ENCODE measurements at regions of chr9 and their contacts with region 1.

Region 1: GRCh38 chr9:27719711-27720110 is 146.4 kb upstream of the C9orf72 start:
- DNase-seq: no peak
- ATAC-seq: no peak
- H3K4me3 ChIP-seq: no peak overlapping the region
- H3K27ac ChIP-seq: no peak overlapping the region
- H3K4me1 ChIP-seq: no peaks in the 10 kb centered on the region
- H3K27me3 ChIP-seq: no peaks in the 10 kb centered on the region
- CTCF ChIP-seq: no peak
- EP300 ChIP-seq: no peak
- POLR2A ChIP-seq: no peak
- RAD21 ChIP-seq: no peak

Region 2: DNA sequence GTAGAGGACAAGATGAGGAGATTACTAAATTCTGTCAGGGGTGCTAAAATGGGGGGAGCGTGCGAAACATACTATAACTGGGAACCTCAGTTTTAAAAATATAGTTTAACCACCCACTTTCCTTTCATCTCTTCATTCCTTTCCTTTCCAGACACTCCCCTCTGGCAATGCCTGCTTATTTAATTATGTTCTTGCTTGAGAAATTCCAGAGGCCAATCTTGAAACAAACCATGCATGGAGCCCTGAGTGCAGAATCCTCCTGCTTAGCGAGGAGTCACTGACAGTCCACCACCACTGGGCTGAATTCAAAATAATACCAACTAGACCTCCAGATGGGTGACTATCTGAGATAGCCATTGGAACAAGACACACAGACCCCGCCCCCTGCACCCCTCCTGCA is 116.8 kb before region 1 on chr9:
- CTCF ChIA-PET with region 1: no interaction called
- POLR2A ChIA-PET with region 1: no interaction called
- in situ Hi-C with region 1: no loop called
- intact Hi-C with region 1: no loop called
- DNase-seq: no peak
- ATAC-seq: no peak
- H3K4me3 ChIP-seq: no peak overlapping the region
- H3K27ac ChIP-seq: no peak overlapping the region
- H3K4me1 ChIP-seq: no peaks in the 10 kb centered on the region
- H3K27me3 ChIP-seq: no peaks in the 10 kb centered on the region
- CTCF ChIP-seq: no peak
- EP300 ChIP-seq: no peak
- POLR2A ChIP-seq: no peak
- RAD21 ChIP-seq: no peak

Region 3: GRCh38 chr9:27645161-27645840 is 74.4 kb before region 1 on chr9:
- CTCF ChIA-PET with region 1: no interaction called
- POLR2A ChIA-PET with region 1: no interaction called
- in situ Hi-C with region 1: no loop called
- intact Hi-C with region 1: no loop called
- DNase-seq: no peak
- ATAC-seq: no peak
- H3K4me3 ChIP-seq: no peak overlapping the region
- H3K27ac ChIP-seq: no peak overlapping the region
- H3K4me1 ChIP-seq: no peaks in the 10 kb centered on the region
- H3K27me3 ChIP-seq: no peaks in the 10 kb centered on the region
- CTCF ChIP-seq: no peak
- EP300 ChIP-seq: no peak
- POLR2A ChIP-seq: no peak
- RAD21 ChIP-seq: no peak

Region 4: GRCh38 chr9:27743490-27743889 is 23.8 kb after region 1 on chr9:
- CTCF ChIA-PET with region 1: no interaction called
- POLR2A ChIA-PET with region 1: no interaction called
- in situ Hi-C with region 1: no loop called
- intact Hi-C with region 1: no loop called
- DNase-seq: no peak
- ATAC-seq: no peak
- H3K4me3 ChIP-seq: no peak overlapping the region
- H3K27ac ChIP-seq: no peak overlapping the region
- H3K4me1 ChIP-seq: no peaks in the 10 kb centered on the region
- H3K27me3 ChIP-seq: no peaks in the 10 kb centered on the region
- CTCF ChIP-seq: no peak
- EP300 ChIP-seq: no peak
- POLR2A ChIP-seq: no peak
- RAD21 ChIP-seq: no peak

Region 5: GRCh38 chr9:28073270-28073669 is 353.6 kb after region 1 on chr9:
- CTCF ChIA-PET with region 1: no interaction called
- POLR2A ChIA-PET with region 1: no interaction called
- in situ Hi-C with region 1: loop called (anchors 5 kb)
- intact Hi-C with region 1: no loop called
- DNase-seq: peak; percentile 30
- ATAC-seq: peak; percentile 60
- H3K4me3 ChIP-seq: peak overlapping the region in 1 of 3 experiments; percentile 12; a peak in 1 of 6 replicates
- H3K27ac ChIP-seq: no peak overlapping the region
- H3K4me1 ChIP-seq: no peaks in the 10 kb centered on the region
- H3K27me3 ChIP-seq: no peaks in the 10 kb centered on the region
- CTCF ChIP-seq: peak; percentile 53
- EP300 ChIP-seq: no peak
- POLR2A ChIP-seq: no peak
- RAD21 ChIP-seq: peak; percentile 25; the same call in 1 of the 2 replicates

Measured in HepG2 (cell line).